Posterior cingulate gyrus (tissue), 11 donors: ENCODE measurements at regions of chr15 and their contacts with region 1.

Region 1: DNA sequence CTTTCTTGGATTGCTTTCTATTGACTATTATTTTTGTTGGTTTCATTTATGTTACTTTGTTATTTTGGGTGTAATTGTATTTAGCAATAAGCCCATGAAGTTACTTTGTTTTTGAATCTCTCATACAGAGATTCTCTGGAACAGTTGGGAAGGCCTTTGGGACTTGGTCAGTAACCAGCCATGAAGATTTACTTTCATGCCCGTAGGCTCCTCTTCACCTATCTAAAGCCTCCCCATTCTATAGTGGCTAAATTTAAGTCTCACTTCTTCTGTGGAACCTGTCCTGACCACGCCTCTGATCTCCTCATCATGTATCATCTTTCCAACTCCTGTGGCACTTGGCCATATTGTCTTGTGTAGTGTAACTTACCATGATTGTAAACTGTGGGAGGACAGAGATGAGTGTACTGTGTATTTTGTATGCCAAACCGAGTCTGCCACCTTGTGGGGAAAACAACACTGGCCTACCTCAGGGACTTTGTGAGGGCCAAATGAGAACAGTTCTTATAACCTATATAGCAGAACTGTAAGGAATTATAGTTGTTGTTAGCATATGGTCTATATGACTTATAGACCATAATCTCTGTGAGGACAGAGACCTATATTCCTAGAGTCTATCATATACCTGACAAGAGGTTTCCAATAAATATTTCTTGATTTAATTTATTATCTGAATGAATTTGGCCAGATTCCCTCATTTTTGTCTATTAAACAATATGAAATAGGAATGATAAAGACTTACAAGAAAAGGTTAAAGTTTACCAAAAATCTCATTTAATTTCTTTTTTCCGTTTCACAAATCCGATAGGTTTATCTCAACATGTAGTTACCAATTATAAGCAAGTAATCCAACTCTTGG is 75.0 kb downstream of the STARD9 start:
- DNase-seq: peak in 7 of 10 donors; percentile 22 to 87 (median 65)

Region 2: DNA sequence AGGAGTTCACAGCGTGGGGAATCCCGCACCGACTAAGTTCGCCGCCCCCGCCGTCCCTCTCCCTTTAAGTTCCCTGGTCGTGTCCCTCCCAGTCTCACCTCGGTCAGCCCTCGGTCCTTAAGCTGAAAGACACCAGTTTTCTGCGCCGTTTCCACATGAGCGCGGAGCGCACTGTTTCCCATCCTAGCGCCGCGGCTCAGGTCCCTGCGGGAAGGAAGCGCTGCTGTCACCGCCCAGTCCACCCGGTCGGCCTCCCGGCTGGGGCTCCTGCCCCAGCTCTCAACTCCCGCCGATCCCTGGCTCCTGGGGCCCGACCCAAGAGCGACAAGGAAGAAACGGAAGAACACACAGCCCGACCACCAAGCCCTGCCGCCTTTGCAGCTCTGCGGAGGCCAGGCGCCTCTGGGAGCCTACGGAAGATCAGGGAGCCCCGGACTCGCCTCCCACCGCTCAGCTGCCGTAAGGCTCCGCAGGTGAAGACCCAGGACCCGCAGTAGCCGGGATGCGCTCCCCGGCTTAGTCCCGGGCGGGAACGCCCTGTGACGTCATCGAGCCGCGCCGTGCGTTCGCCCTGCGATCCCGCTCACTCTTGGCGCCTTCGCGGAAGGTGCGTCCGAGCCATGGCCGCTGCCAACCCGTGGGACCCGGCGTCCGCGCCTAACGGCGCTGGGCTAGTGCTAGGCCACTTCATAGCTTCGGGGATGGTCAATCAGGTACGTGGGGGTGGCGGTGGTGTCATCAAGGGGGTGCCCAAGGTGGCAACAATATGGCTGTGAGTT is 102.0 kb before region 1 on chr15 and contains the starts of genes HAUS2 and LRRC57:
- intact Hi-C with region 1: loop called (anchors 1 kb)
- DNase-seq: peak; percentile 78 to 98 (median 84)

Region 3: DNA sequence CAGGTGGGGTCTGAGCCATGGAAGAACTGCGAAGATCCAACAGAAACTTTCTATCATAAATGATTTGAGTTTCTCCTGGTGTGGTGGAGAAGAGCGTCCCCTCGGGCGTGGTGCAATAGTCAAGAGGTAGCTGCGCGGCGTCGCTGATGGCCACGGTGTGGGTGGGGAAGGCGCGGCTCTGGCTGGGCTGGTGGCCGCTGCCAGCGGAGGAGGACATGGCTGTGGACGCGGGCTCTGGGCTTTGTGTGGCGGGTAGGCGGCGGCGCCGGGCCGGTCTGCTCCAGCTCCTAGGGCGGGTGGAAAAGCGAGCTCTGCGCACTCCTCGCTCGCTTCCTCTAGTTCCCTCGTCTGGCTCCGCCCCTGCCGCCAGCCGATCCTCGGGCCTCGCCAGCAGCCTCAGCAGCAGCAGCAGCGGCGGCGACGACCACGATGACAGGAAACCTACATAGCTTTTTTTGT is 69.1 kb before region 1 on chr15:
- intact Hi-C with region 1: loop called (anchors 2 kb)
- DNase-seq: peak; percentile 78 to 98 (median 88)